CD8-positive, alpha-beta T cell (primary cell): ENCODE measurements at regions of chr20 and their contacts with region 1.

Region 1: GRCh38 chr20:62302341-62303058 is at the start of gene ADRM1:
- DNase-seq: peak; percentile 93 to 98 (median 95)
- ATAC-seq: peak; percentile 85
- H3K4me3 ChIP-seq: peak within 1 kb of the TSS; percentile 79 to 92
- H3K4me3 Mint-ChIP-seq: peak within 1 kb of the TSS; percentile 93
- H3K27ac ChIP-seq: peak within 1 kb of the TSS; percentile 82 to 88
- H3K27ac Mint-ChIP-seq: peak within 1 kb of the TSS; percentile 97
- H3K4me1 ChIP-seq: peaks cover 26% of the 10 kb centered on the region
- H3K4me1 Mint-ChIP-seq: peaks cover 27% of the 10 kb centered on the region
- H3K27me3 ChIP-seq: no peaks in the 10 kb centered on the region
- H3K27me3 Mint-ChIP-seq: no peaks in the 10 kb centered on the region
- CTCF ChIP-seq: peak; percentile 88
- total RNA-seq, gene ADRM1: 52.7 to 52.9 TPM

Region 2: GRCh38 chr20:61874501-61875026 is 427.9 kb before region 1 on chr20:
- CTCF ChIA-PET with region 1: no interaction called
- POLR2A ChIA-PET with region 1: no interaction called
- intact Hi-C with region 1: no loop called
- DNase-seq: no peak
- ATAC-seq: no peak
- H3K4me3 ChIP-seq: no peak overlapping the region
- H3K4me3 Mint-ChIP-seq: no peak overlapping the region
- H3K27ac ChIP-seq: no peak overlapping the region
- H3K27ac Mint-ChIP-seq: no peak overlapping the region
- H3K4me1 ChIP-seq: no peaks in the 10 kb centered on the region
- H3K4me1 Mint-ChIP-seq: no peaks in the 10 kb centered on the region
- H3K27me3 ChIP-seq: no peaks in the 10 kb centered on the region
- H3K27me3 Mint-ChIP-seq: no peaks in the 10 kb centered on the region
- CTCF ChIP-seq: no peak

Region 3: GRCh38 chr20:62065669-62066338 is 236.7 kb before region 1 on chr20 and contains the start of gene TAF4:
- CTCF ChIA-PET with region 1: no interaction called
- POLR2A ChIA-PET with region 1: no interaction called
- intact Hi-C with region 1: loop called in 1 of 2 experiments (anchors 5 kb)
- DNase-seq: peak; percentile 69 to 92 (median 79)
- ATAC-seq: peak; percentile 77
- H3K4me3 ChIP-seq: peak within 1 kb of the TSS; percentile 54 to 70
- H3K4me3 Mint-ChIP-seq: peak within 1 kb of the TSS; percentile 90
- H3K27ac ChIP-seq: peak within 1 kb of the TSS; percentile 47 to 74
- H3K27ac Mint-ChIP-seq: peak within 1 kb of the TSS; percentile 95
- H3K4me1 ChIP-seq: peaks cover 42% of the 10 kb centered on the region
- H3K4me1 Mint-ChIP-seq: peaks cover 52% of the 10 kb centered on the region
- H3K27me3 ChIP-seq: no peaks in the 10 kb centered on the region
- H3K27me3 Mint-ChIP-seq: no peaks in the 10 kb centered on the region
- CTCF ChIP-seq: no peak
- total RNA-seq, gene TAF4: 9.8 to 14.1 TPM

Region 4: GRCh38 chr20:62143118-62143973 is 159.2 kb before region 1 on chr20 and contains the starts of genes PSMA7 and SS18L1:
- CTCF ChIA-PET with region 1: no interaction called
- POLR2A ChIA-PET with region 1: no interaction called
- intact Hi-C with region 1: loop called (anchors 1 to 5 kb)
- DNase-seq: peak; percentile 65 to 95 (median 85)
- ATAC-seq: peak; percentile 83
- H3K4me3 ChIP-seq: peak within 1 kb of the TSS; percentile 59 to 60
- H3K4me3 Mint-ChIP-seq: peak within 1 kb of the TSS; percentile 92
- H3K27ac ChIP-seq: peak within 1 kb of the TSS; percentile 58 to 83
- H3K27ac Mint-ChIP-seq: peak within 1 kb of the TSS; percentile 93
- H3K4me1 ChIP-seq: peaks cover 37% of the 10 kb centered on the region
- H3K4me1 Mint-ChIP-seq: peaks cover 50% of the 10 kb centered on the region
- H3K27me3 ChIP-seq: no peaks in the 10 kb centered on the region
- H3K27me3 Mint-ChIP-seq: no peaks in the 10 kb centered on the region
- CTCF ChIP-seq: no peak
- total RNA-seq, gene PSMA7: 170 to 179 TPM
- total RNA-seq, gene SS18L1: 12.6 to 12.9 TPM

Region 5: DNA sequence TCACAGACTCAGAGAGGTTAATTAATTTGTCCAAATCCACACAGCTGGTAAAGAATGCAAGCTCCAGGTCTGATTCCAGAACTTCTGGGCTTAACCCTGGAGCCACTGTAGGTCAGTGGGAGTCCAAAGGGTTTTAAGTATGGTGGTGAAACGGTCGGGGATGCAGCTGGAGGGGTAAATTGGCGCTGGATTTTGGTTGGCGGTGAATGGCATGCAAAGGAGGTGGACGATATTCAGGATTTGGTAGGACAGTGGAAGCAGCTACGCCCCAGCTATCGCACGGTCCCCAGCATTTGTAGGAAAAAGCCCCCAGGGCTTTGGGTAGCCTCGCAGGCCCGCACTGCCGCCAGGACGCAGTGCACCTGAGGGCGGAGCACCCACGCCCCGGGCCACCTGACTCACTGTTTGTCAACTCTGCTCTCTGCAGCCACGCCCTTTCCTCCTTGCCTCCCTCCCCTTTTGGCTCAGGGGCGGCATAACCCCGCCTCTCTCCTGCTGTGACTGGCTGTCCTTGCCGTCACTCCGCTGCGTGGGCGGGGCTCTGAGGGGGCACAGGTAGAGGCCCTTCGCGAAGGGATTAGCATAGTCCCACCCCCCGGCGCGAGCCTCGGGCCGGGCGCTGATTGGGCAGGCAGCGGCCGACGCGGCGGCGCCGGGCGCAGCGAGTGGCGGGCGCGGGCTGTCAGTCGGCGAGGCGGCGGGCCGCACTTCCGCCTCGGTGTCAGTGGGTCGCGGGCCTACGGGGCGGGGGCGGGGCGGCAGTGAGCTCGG is 64.5 kb before region 1 on chr20 and contains the start of gene OSBPL2:
- CTCF ChIA-PET with region 1: no interaction called
- POLR2A ChIA-PET with region 1: no interaction called
- intact Hi-C with region 1: loop called (anchors 1 kb)
- DNase-seq: peak; percentile 100
- ATAC-seq: peak; percentile 98
- H3K4me3 ChIP-seq: peak within 1 kb of the TSS; percentile 54 to 58
- H3K4me3 Mint-ChIP-seq: peak within 1 kb of the TSS; percentile 84
- H3K27ac ChIP-seq: peak within 1 kb of the TSS; percentile 65 to 70
- H3K27ac Mint-ChIP-seq: peak within 1 kb of the TSS; percentile 95
- H3K4me1 ChIP-seq: peaks cover 24% of the 10 kb centered on the region
- H3K4me1 Mint-ChIP-seq: peaks cover 41% of the 10 kb centered on the region
- H3K27me3 ChIP-seq: no peaks in the 10 kb centered on the region
- H3K27me3 Mint-ChIP-seq: peaks cover 9% of the 10 kb centered on the region
- CTCF ChIP-seq: no peak
- total RNA-seq, gene OSBPL2: 63.6 to 64.2 TPM

Region 6: DNA sequence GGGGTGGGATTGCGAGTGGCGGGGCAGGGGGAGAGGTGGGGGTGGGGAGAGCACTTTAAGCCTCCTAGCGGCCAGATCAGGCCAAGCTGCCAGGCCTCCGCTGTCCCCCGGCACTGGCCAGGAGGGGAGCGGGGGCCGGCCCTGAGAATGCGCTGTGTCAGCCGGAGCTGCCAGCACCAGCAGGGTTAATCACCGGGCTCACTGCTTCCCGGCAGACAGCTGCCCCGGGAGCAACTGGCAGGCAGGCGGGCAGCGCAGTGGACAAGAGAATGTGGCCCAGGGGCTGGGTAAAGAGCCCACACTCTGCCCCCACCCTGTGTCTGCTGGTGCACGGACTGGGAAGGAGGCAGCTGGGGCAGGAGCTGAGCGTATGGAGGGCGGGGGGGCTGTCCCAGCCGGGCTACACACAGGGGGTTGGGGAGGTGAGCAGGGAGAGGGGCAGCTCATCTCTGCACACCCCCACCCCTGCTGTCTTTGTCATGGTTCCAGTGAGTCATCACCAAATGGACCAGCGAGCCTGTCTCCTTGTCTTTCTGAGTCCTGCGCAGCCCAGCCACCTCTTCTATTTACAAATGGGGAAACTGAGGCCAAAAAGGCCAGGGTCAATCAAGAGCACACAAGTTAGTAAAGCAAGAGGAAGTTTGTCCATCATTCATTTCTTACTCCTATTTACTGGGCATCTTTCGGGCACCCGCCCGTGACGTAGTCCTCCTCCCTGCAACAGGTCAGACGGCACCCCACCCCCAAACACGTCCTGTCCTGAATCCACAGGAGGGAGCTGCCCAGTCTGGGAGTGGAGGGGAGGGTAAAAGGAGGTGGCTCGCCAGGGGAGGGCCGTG is 66.7 kb after region 1 on chr20:
- CTCF ChIA-PET with region 1: no interaction called
- POLR2A ChIA-PET with region 1: no interaction called
- intact Hi-C with region 1: no loop called
- DNase-seq: no peak
- ATAC-seq: no peak
- H3K4me3 ChIP-seq: no peak overlapping the region
- H3K4me3 Mint-ChIP-seq: no peak overlapping the region
- H3K27ac ChIP-seq: no peak overlapping the region
- H3K27ac Mint-ChIP-seq: no peak overlapping the region
- H3K4me1 ChIP-seq: peaks cover 17% of the 10 kb centered on the region
- H3K4me1 Mint-ChIP-seq: peaks cover 2% of the 10 kb centered on the region
- H3K27me3 ChIP-seq: peaks cover 20 to 25% of the 10 kb centered on the region in 2 experiments
- H3K27me3 Mint-ChIP-seq: peaks cover 19% of the 10 kb centered on the region
- CTCF ChIP-seq: no peak

Region 7: DNA sequence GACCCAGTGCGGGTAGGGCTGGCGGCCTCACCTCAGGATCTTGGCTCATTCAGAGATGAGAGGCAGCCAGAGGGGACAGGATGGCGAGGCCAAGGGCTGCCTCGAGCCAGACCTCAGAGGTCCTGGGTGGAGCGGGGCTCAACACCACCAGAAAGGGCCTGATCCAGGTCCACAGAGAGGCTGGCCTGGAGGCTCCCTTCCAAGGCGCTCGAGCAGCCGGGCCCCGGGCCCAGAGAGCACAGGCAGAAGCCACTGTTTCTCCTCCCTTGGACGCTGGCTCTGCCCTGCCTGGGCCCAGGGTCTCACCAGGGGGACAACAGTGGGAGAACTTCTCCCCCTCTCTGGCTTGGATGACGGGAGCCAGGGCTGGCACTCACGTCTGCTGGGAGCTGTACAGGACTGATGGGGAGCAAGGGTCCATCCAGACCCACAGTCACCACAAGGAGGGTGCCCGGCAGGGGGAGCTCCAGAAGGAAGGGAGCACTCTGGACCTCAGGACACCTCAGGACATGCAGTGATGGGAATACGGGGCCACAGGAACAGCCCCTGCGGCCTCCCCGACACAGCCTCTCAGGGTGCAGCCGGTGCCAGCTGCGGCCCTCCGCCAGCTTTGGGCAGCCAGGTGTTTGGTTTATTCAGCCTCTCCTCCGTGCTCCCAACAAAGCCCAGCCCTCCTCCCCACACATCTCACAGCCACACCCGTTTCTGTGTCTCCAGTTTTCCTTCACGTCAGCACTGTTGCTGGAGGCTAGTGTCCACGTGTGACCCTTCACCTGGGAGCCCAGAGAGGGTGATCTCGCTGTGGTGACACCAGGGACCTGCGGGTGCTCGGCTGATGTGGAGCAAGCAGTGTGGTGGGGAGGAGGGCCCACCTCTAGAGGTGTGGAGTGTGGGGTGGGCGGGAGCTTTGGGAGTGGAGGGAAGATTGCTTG is 93.1 kb after region 1 on chr20:
- CTCF ChIA-PET with region 1: no interaction called
- POLR2A ChIA-PET with region 1: no interaction called
- intact Hi-C with region 1: no loop called
- DNase-seq: no peak
- ATAC-seq: no peak
- H3K4me3 ChIP-seq: no peak overlapping the region
- H3K4me3 Mint-ChIP-seq: no peak overlapping the region
- H3K27ac ChIP-seq: no peak overlapping the region
- H3K27ac Mint-ChIP-seq: no peak overlapping the region
- H3K4me1 ChIP-seq: no peaks in the 10 kb centered on the region
- H3K4me1 Mint-ChIP-seq: no peaks in the 10 kb centered on the region
- H3K27me3 ChIP-seq: no peaks in the 10 kb centered on the region
- H3K27me3 Mint-ChIP-seq: no peaks in the 10 kb centered on the region
- CTCF ChIP-seq: no peak

Region 8: DNA sequence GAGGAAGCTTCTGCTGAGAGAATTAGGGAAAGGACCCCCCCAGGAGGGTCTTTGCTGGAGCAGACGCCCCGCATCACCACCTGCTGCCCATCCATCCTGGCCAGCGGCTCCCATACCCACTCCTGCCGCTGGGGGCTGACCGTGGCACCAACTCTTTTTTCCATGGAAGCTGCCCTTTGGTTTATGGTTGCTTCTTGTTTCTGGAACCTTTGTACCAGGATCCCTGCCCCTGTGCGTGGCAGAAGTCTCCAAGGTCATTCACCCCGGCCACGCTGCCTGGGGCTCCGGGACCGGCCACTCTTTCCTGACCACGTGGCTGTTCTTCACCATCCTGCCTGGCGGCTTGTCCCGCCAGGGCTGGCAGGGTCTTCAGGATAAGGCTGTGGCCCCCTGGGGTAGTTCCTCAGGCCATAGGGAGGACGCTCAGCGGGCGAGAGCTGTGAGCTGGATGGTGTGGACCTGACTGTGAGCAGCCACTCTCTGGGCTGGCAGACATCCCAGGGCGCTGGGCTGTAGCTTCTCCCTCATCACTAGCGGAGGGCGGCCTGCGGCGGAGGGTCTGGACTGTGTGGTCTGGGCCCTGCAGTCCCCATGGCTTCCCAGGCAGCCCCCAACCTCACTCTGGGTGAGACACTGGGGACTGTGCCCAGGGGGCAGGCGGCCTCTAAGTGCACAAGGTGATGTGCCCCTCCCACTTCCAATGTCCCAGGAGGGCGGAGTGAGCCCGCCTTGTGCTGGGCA is 147.6 kb after region 1 on chr20:
- CTCF ChIA-PET with region 1: no interaction called
- POLR2A ChIA-PET with region 1: no interaction called
- intact Hi-C with region 1: no loop called
- DNase-seq: no peak
- ATAC-seq: no peak
- H3K4me3 ChIP-seq: no peak overlapping the region
- H3K4me3 Mint-ChIP-seq: no peak overlapping the region
- H3K27ac ChIP-seq: no peak overlapping the region
- H3K27ac Mint-ChIP-seq: no peak overlapping the region
- H3K4me1 ChIP-seq: no peaks in the 10 kb centered on the region
- H3K4me1 Mint-ChIP-seq: no peaks in the 10 kb centered on the region
- H3K27me3 ChIP-seq: peaks cover 0 to 4% of the 10 kb centered on the region in 2 experiments
- H3K27me3 Mint-ChIP-seq: peaks cover 8% of the 10 kb centered on the region
- CTCF ChIP-seq: no peak

Region 9: GRCh38 chr20:62616728-62617621 is 314.5 kb after region 1 on chr20:
- CTCF ChIA-PET with region 1: no interaction called
- POLR2A ChIA-PET with region 1: no interaction called
- intact Hi-C with region 1: loop called in 1 of 2 experiments (anchors 5 kb)
- DNase-seq: peak; percentile 44 to 82 (median 68)
- ATAC-seq: peak; percentile 86
- H3K4me3 ChIP-seq: no peak overlapping the region
- H3K4me3 Mint-ChIP-seq: no peak overlapping the region
- H3K27ac ChIP-seq: no peak overlapping the region
- H3K27ac Mint-ChIP-seq: peak overlapping the region; percentile 41
- H3K4me1 ChIP-seq: peaks cover 26% of the 10 kb centered on the region
- H3K4me1 Mint-ChIP-seq: peaks cover 22% of the 10 kb centered on the region
- H3K27me3 ChIP-seq: no peaks in the 10 kb centered on the region
- H3K27me3 Mint-ChIP-seq: no peaks in the 10 kb centered on the region
- CTCF ChIP-seq: peak; percentile 82

Region 10: DNA sequence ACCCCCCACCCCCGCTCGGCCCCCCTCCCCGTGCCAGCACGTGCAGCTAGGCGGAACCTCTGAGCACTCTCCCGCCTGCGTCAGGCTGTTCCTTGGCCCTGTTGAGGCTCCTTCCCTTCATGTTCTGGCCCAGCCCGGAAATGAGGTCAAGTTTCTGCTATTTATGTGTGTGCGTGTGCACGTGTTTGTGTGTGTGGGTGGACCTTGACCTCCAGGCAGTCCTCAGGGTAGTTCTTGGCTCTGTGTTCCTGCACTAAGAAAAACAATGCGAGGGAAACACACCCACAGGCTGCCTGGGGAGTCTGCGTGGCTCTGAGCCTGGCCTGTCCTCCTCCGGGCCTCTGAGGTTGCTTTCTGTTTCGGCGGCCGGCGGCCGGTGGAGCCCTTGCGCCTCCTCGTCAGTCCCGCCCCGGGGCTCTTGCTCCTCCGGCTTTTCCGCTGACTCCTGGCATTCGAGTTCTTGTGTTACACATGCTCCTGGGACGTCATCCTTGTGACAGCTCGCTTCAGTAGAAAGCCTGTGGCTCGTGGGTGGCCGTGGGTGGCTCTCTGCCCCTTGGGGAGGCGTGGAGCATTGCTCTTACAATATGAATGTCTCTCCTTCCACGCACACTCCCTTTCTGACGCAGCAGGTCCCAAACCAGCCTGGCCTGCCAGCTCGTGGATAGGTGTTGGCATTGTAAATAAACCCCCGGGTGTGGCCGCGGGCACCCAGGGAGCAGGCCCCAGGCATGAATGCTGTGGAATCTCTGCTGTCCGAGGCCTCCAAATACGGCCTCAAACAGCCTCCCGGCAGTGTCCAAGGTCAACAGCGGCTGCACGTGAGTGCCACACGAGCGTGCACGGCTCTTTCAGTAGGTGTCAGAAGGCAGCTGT is 349.8 kb after region 1 on chr20:
- CTCF ChIA-PET with region 1: no interaction called
- POLR2A ChIA-PET with region 1: no interaction called
- intact Hi-C with region 1: loop called (anchors 2 to 10 kb)
- DNase-seq: peak; percentile 44 to 88 (median 75)
- ATAC-seq: peak; percentile 59
- H3K4me3 ChIP-seq: peak overlapping the region; percentile 29 to 35
- H3K4me3 Mint-ChIP-seq: peak overlapping the region; percentile 80
- H3K27ac ChIP-seq: peak overlapping the region; percentile 82 to 83
- H3K27ac Mint-ChIP-seq: peak overlapping the region; percentile 97
- H3K4me1 ChIP-seq: peaks cover 24% of the 10 kb centered on the region
- H3K4me1 Mint-ChIP-seq: peaks cover 31% of the 10 kb centered on the region
- H3K27me3 ChIP-seq: no peaks in the 10 kb centered on the region
- H3K27me3 Mint-ChIP-seq: no peaks in the 10 kb centered on the region
- CTCF ChIP-seq: no peak